ENCODE measurements at regions of chr7 and their contacts with region 1.

Region 1: DNA sequence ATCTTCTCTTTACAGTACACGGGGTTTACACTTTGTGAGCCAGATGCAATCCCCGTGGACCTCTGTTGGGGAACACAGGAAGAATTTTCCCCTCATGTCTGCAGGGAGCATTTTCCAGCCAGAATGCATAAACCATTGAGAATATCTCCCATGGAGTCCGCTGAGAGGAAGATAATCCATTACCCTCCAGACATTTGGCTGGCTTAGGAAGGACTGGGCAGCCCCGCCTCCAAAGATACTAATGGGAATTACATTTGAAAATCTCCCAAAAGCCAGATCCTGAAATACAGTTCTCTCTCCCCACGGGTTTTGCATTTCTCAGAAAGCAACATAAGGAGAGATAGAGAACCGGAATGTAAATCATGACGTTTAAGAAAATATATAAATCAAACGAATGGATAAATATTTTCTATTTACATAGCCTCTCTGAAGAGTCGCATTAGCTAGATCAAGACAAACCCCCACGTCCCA is 53.5 kb downstream of the TRIL start:
- DNase-seq: no peak
- H3K4me3 ChIP-seq: no peak overlapping the region
- H3K27ac ChIP-seq: no peak overlapping the region
- H3K4me1 ChIP-seq: no peaks in the 10 kb centered on the region
- CTCF ChIP-seq: no peak

Region 2: DNA sequence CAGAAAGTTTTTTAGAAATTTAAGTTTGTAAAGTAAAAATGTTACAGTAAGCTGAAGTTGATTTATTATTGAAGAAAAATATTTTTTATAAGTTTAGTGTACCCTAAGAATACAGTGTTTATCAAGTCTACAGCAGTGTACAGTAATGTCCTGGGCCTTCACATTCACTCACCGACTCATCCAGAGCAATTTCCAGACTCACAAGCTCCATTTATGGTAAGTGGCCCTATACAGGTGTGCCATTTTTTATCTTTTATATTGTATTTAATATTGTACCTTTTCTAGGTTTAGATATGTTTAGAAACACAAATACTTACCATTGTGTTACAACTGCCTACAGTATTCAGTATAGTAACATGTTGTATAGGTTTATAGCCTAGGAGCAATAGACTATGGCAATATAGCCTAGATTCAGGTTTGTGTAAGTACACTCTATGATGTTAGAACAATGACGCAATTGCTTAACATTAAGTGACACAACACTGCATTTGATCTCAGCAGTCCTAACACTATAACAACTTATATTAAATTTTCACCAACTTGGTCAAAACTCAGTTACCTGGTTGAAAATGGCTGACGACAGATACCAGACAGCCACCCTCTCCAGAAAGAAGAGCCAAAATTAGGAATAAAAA is 1287.6 kb before region 1 on chr7:
- CTCF ChIA-PET with region 1: no interaction called
- POLR2A ChIA-PET with region 1: interaction called, 10 read pairs
- intact Hi-C with region 1: no loop called
- DNase-seq: no peak
- H3K4me3 ChIP-seq: no peak overlapping the region
- H3K27ac ChIP-seq: no peak overlapping the region
- H3K4me1 ChIP-seq: no peaks in the 10 kb centered on the region
- CTCF ChIP-seq: no peak

Region 3: GRCh38 chr7:28879105-28879504 is 25.5 kb before region 1 on chr7:
- CTCF ChIA-PET with region 1: no interaction called
- POLR2A ChIA-PET with region 1: no interaction called
- intact Hi-C with region 1: no loop called
- DNase-seq: peak; percentile 9
- H3K4me3 ChIP-seq: no peak overlapping the region
- H3K27ac ChIP-seq: no peak overlapping the region
- H3K4me1 ChIP-seq: no peaks in the 10 kb centered on the region
- CTCF ChIP-seq: no peak